HepG2 (cell line): ENCODE measurements at regions of chr3 and their contacts with region 1.

Region 1: GRCh38 chr3:174397848-174398247 is 461.3 kb upstream of the NAALADL2 start:
- DNase-seq: peak; percentile 1
- ATAC-seq: no peak
- H3K4me3 ChIP-seq: no peak overlapping the region
- H3K27ac ChIP-seq: no peak overlapping the region
- H3K4me1 ChIP-seq: no peaks in the 10 kb centered on the region
- H3K27me3 ChIP-seq: no peaks in the 10 kb centered on the region
- CTCF ChIP-seq: no peak
- EP300 ChIP-seq: no peak
- POLR2A ChIP-seq: no peak
- RAD21 ChIP-seq: no peak

Region 2: GRCh38 chr3:175121225-175121624 is 723.4 kb after region 1 on chr3:
- CTCF ChIA-PET with region 1: no interaction called
- POLR2A ChIA-PET with region 1: no interaction called
- in situ Hi-C with region 1: no loop called
- intact Hi-C with region 1: loop called (anchors 10 kb)
- DNase-seq: no peak
- ATAC-seq: no peak
- H3K4me3 ChIP-seq: no peak overlapping the region
- H3K27ac ChIP-seq: no peak overlapping the region
- H3K4me1 ChIP-seq: no peaks in the 10 kb centered on the region
- H3K27me3 ChIP-seq: no peaks in the 10 kb centered on the region
- CTCF ChIP-seq: no peak
- EP300 ChIP-seq: no peak
- POLR2A ChIP-seq: no peak
- RAD21 ChIP-seq: no peak